H1 (cell line): ENCODE measurements at regions of chr11 and their contacts with region 1.

Region 1: GRCh38 chr11:69950120-69950519 is 128.0 kb upstream of the ANO1 start:
- DNase-seq: peak; percentile 60 to 95
- H3K4me3 ChIP-seq: no peak overlapping the region
- H3K27ac ChIP-seq: no peak overlapping the region
- H3K4me1 ChIP-seq: peaks cover 4 to 16% (median 9%) of the 10 kb centered on the region in 4 experiments; a peak in 6 of 7 replicates
- H3K27me3 ChIP-seq: no peaks in the 10 kb centered on the region; a peak in 1 of 7 replicates
- CTCF ChIP-seq: peak; percentile 95 to 100 (median 100)
- EP300 ChIP-seq: no peak
- POLR2A ChIP-seq: no peak
- RAD21 ChIP-seq: peak; percentile 96 to 98

Region 2: DNA sequence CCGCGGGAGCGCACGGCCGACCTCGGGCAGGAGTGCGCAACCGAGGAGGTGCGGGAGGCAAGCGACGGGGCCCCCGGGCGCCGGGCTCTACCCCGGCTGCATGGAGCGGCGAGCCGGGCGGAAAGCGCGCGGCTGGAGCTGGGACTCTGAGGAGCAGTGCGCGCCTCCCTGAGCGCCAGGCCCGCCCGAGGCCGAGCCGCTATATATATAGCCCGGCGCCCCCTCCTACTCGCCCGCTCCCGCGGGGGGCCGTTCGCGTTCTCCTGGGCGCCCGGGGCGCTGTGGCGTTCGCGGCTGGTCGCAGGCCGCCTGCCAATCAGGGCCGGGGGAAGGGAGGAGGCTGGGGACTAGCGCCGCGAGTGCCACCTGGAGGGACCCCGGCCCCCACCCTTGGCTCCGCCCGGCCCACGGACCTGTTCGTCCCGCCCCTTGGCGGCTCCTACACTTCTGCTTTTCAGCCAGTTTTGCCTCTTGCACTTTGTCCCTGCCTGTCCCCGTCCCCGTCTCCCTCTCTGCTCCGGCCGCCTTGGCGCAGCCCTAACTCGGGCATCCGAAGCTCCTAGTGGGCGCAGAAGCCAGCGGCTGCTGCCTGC is 174.9 kb before region 1 on chr11 and contains the start of gene FGF4:
- CTCF ChIA-PET with region 1: no interaction called
- POLR2A ChIA-PET with region 1: no interaction called
- DNase-seq: peak; percentile 21 to 83
- H3K4me3 ChIP-seq: peak within 1 kb of the TSS; percentile 23 to 60 (median 36)
- H3K27ac ChIP-seq: no peak within 1 kb of the TSS
- H3K4me1 ChIP-seq: peaks cover 11 to 36% (median 28%) of the 10 kb centered on the region in 4 experiments
- H3K27me3 ChIP-seq: peaks cover 20 to 50% (median 46%) of the 10 kb centered on the region in 4 experiments
- CTCF ChIP-seq: no peak
- EP300 ChIP-seq: no peak
- POLR2A ChIP-seq: no peak
- RAD21 ChIP-seq: no peak
- total RNA-seq, gene FGF4: 2.0 TPM in 2 replicates

Region 3: DNA sequence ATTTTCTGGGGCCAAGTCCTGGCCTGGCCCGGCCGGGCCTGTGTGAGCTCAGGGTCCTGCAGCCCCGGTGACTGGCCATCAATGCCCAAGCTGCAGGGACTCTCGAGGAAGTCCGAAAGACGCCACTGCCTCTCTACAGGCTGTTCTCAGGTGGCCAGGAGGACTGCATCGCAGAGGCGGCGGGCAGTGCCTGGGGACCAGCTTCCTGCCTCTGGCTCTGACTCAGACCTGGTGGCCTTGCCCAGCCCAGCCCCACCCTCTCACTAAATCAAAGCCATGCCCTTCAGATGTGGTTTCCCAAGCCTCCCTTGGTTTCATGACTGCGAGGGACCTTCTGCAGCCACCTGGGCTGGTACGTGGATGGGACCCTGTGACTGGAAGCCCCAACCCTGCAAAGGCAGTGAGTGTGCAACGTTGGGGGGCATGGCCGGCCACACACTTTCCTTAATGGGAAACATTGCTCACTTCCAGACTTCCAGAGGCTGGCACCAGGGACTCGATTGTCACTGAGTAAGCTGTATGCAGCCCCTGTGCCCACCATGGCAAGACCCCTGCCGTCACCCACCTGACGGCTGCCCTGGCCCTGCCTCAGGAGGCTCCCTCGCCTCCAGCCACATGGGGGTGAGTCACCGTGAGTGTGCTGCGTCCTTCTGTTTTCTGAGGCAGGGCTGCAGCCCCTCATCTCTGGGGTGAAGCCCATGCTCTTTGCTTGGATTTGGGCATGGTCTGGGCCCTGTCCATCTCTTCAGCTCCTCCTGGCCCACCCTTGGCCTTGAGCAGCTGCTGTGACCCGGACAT is 124.9 kb before region 1 on chr11:
- CTCF ChIA-PET with region 1: no interaction called
- POLR2A ChIA-PET with region 1: no interaction called
- DNase-seq: no peak
- H3K4me3 ChIP-seq: no peak overlapping the region
- H3K27ac ChIP-seq: no peak overlapping the region
- H3K4me1 ChIP-seq: peaks cover 0 to 6% (median 0%) of the 10 kb centered on the region in 4 experiments; a peak in 4 of 7 replicates
- H3K27me3 ChIP-seq: peaks cover 8 to 29% (median 20%) of the 10 kb centered on the region in 4 experiments
- CTCF ChIP-seq: no peak
- EP300 ChIP-seq: no peak
- POLR2A ChIP-seq: no peak
- RAD21 ChIP-seq: no peak

Region 4: DNA sequence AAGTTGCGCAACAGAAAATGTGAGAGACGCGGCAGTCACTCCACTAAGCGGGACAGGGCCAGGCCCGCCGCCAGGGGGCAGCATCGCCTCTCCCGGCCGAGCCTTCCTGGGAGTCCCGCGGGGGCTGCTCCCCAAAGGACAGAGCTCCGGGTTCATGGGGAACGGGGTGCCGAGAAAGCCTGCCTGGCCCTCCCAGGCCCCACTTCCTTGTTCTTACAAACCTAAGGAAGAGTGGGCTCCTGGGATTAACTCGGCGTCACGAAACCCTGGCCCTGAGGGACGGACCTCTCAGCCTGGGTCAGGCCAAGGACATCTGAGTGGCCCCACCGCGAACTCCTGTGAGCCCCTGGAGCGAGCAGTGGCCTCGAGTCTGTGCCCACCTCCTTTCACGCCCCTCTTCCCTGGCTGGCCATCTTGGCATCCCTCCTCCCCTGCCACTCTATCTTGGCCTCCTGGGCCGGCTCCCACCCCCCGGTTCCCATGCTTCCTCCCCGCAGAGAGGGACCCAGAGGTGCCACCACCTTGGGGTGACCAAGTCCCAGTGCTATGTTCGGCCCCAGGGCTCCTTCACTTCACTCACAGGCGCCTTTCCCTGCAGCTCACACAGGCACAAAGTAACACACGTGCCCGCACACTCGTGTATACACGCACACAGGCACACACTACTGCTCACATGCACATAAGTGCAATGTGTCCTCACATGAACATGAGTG is 31.0 kb before region 1 on chr11:
- CTCF ChIA-PET with region 1: interaction called, 34 read pairs
- POLR2A ChIA-PET with region 1: no interaction called
- DNase-seq: peak; percentile 38 to 99
- H3K4me3 ChIP-seq: no peak overlapping the region
- H3K27ac ChIP-seq: no peak overlapping the region
- H3K4me1 ChIP-seq: peaks cover 0 to 3% (median 1%) of the 10 kb centered on the region in 4 experiments; a peak in 5 of 7 replicates
- H3K27me3 ChIP-seq: peaks cover 1 to 19% (median 10%) of the 10 kb centered on the region in 4 experiments; a peak in 6 of 7 replicates
- CTCF ChIP-seq: peak; percentile 89 to 94 (median 93)
- EP300 ChIP-seq: no peak
- POLR2A ChIP-seq: no peak
- RAD21 ChIP-seq: peak; percentile 83 to 89

Region 5: GRCh38 chr11:70029115-70029830 is 79.2 kb after region 1 on chr11:
- CTCF ChIA-PET with region 1: interaction called, 37 read pairs
- POLR2A ChIA-PET with region 1: no interaction called
- DNase-seq: no peak
- H3K4me3 ChIP-seq: no peak overlapping the region
- H3K27ac ChIP-seq: no peak overlapping the region
- H3K4me1 ChIP-seq: peaks cover 0 to 5% (median 2%) of the 10 kb centered on the region in 4 experiments; a peak in 2 of 7 replicates
- H3K27me3 ChIP-seq: peaks cover 0 to 2% (median 0%) of the 10 kb centered on the region in 4 experiments; a peak in 2 of 7 replicates
- CTCF ChIP-seq: peak in 1 of 3 experiments; percentile 17; a peak in 1 of 4 replicates
- EP300 ChIP-seq: no peak
- POLR2A ChIP-seq: no peak
- RAD21 ChIP-seq: peak in 1 of 2 experiments; percentile 15; a peak in 1 of 4 replicates

Region 6: DNA sequence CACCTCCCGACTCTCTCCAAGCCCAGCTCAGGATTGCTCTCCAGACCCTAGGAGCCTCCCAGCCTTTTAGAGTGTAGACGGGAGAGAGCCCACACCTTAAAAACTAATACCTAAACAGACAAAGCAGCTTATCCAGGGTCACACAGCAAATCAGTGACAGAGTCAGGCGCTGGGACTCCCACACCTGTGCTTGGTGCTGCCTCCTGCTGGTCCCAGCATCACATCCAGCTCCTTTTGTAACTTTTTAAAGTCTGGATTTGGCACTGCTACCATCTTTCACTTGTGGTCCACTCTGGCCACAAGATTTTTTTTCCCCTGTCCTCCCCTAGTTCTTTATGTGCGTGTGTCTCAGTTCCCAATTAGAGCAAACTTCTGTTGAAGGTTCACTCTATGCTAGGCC is 132.7 kb after region 1 on chr11:
- CTCF ChIA-PET with region 1: interaction called, 103 read pairs
- POLR2A ChIA-PET with region 1: no interaction called
- DNase-seq: no peak
- H3K4me3 ChIP-seq: no peak overlapping the region
- H3K27ac ChIP-seq: no peak overlapping the region
- H3K4me1 ChIP-seq: peaks cover 0 to 9% (median 3%) of the 10 kb centered on the region in 4 experiments; a peak in 5 of 7 replicates
- H3K27me3 ChIP-seq: peaks cover 14 to 30% (median 27%) of the 10 kb centered on the region in 4 experiments
- CTCF ChIP-seq: peak; percentile 46 to 68 (median 61)
- EP300 ChIP-seq: no peak
- POLR2A ChIP-seq: no peak
- RAD21 ChIP-seq: peak; percentile 41 to 66

Region 7: GRCh38 chr11:70135625-70136059 is 185.5 kb after region 1 on chr11:
- CTCF ChIA-PET with region 1: interaction called, 23 read pairs
- POLR2A ChIA-PET with region 1: no interaction called
- DNase-seq: no peak
- H3K4me3 ChIP-seq: no peak overlapping the region
- H3K27ac ChIP-seq: no peak overlapping the region
- H3K4me1 ChIP-seq: peaks cover 0 to 4% (median 0%) of the 10 kb centered on the region in 4 experiments; a peak in 3 of 7 replicates
- H3K27me3 ChIP-seq: peaks cover 0 to 2% (median 0%) of the 10 kb centered on the region in 4 experiments; a peak in 2 of 7 replicates
- CTCF ChIP-seq: no peak
- EP300 ChIP-seq: no peak
- POLR2A ChIP-seq: no peak
- RAD21 ChIP-seq: no peak

Region 8: GRCh38 chr11:70176940-70177689 is 227.0 kb after region 1 on chr11:
- CTCF ChIA-PET with region 1: interaction called, 25 read pairs
- POLR2A ChIA-PET with region 1: interaction called, 3 read pairs
- DNase-seq: peak; percentile 27 to 97
- H3K4me3 ChIP-seq: no peak overlapping the region
- H3K27ac ChIP-seq: no peak overlapping the region
- H3K4me1 ChIP-seq: peaks cover 0 to 7% (median 2%) of the 10 kb centered on the region in 4 experiments; a peak in 4 of 7 replicates
- H3K27me3 ChIP-seq: no peaks in the 10 kb centered on the region
- CTCF ChIP-seq: peak; percentile 77 to 94 (median 83)
- EP300 ChIP-seq: no peak
- POLR2A ChIP-seq: no peak
- RAD21 ChIP-seq: peak; percentile 18 to 39; a peak in 3 of 4 replicates